ENCODE measurements at regions of chr10 and their contacts with region 1.

Region 1: GRCh38 chr10:68813559-68813958 is 13.8 kb upstream of the STOX1 start:
- DNase-seq: no peak
- ATAC-seq: no peak
- H3K4me3 ChIP-seq: no peak overlapping the region
- H3K4me3 Mint-ChIP-seq: no peak overlapping the region
- H3K27ac ChIP-seq: no peak overlapping the region
- H3K27ac Mint-ChIP-seq: no peak overlapping the region
- H3K4me1 ChIP-seq: no peaks in the 10 kb centered on the region
- H3K4me1 Mint-ChIP-seq: no peaks in the 10 kb centered on the region
- H3K27me3 ChIP-seq: no peaks in the 10 kb centered on the region
- H3K27me3 Mint-ChIP-seq: no peaks in the 10 kb centered on the region
- CTCF ChIP-seq: no peak

Region 2: DNA sequence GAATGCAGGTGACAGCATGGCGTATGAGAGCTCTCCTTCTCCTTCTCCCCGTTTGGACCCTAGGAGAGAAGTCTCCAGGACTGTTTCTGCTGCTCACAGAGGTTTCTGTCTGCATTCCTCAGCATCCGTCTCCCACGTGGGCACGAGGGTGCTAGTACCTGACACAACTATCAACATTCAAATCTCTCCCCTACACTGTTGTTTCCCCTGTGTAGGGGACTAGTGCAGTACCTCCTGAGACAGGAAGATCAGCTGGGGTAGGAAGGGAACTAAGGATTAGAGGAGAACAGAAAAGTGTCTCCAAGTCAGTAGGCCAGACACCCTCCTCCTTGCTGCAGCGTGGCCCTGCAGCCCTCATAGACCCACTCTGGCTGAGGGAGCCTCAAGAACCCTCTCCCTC is 42.8 kb after region 1 on chr10:
- CTCF ChIA-PET with region 1: no interaction called
- POLR2A ChIA-PET with region 1: no interaction called
- intact Hi-C with region 1: loop called in 1 of 2 experiments (anchors 5 kb)
- DNase-seq: no peak
- ATAC-seq: no peak
- H3K4me3 ChIP-seq: no peak overlapping the region
- H3K4me3 Mint-ChIP-seq: no peak overlapping the region
- H3K27ac ChIP-seq: no peak overlapping the region
- H3K27ac Mint-ChIP-seq: no peak overlapping the region
- H3K4me1 ChIP-seq: no peaks in the 10 kb centered on the region
- H3K4me1 Mint-ChIP-seq: no peaks in the 10 kb centered on the region
- H3K27me3 ChIP-seq: no peaks in the 10 kb centered on the region
- H3K27me3 Mint-ChIP-seq: no peaks in the 10 kb centered on the region
- CTCF ChIP-seq: no peak